HCT116 (cell line): ENCODE measurements at regions of chr19 and their contacts with region 1.

Region 1: GRCh38 chr19:45439569-45440254 is 16.0 kb upstream of the ERCC1 start:
- DNase-seq: no peak
- ATAC-seq: peak; percentile 48
- H3K4me3 ChIP-seq: peak overlapping the region; percentile 34 to 63
- H3K27ac ChIP-seq: peak overlapping the region; percentile 81
- H3K4me1 ChIP-seq: peaks cover 23 to 44% of the 10 kb centered on the region in 2 experiments
- H3K27me3 ChIP-seq: no peaks in the 10 kb centered on the region
- CTCF ChIP-seq: peak; percentile 88 to 98 (median 96)
- POLR2A ChIP-seq: no peak
- RAD21 ChIP-seq: peak; percentile 87

Region 2: DNA sequence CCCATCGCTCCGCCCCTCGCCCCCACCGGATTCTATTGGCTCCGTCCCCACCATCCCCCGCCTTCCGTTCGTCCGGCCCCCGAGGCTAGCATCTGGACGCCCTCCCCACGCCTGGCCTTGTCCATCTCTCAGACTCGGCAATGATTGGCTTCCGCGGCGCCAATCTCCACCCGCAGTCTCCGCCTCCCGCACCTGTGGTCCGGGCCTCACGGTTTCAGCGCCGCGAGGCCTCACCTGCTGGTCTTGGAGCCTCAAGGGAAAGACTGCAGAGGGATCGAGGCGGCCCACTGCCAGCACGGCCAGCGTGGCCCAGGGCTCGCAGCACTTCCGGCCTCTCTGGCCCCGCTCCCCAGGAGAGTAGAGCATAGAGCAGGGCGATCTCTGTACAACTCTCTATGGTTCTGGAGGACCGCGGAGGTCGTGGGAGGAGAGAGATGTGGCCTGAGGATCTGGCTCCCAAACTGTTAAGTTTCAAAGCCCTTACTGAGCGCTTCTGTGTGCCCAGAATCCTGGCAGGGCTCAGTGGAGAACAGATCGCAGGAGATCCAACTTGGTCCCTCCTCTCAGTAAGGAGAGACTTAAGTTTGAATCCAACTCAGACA is 16.0 kb before region 1 on chr19 and contains the start of gene ERCC1:
- CTCF ChIA-PET with region 1: interaction called, 24 read pairs
- POLR2A ChIA-PET with region 1: interaction called, 8 read pairs
- RAD21 ChIA-PET with region 1: no interaction called
- intact Hi-C with region 1: no loop called
- DNase-seq: peak; percentile 96
- ATAC-seq: peak; percentile 82
- H3K4me3 ChIP-seq: peak within 1 kb of the TSS; percentile 93 to 96
- H3K27ac ChIP-seq: peak within 1 kb of the TSS; percentile 99
- H3K4me1 ChIP-seq: peaks cover 38 to 77% of the 10 kb centered on the region in 2 experiments
- H3K27me3 ChIP-seq: no peaks in the 10 kb centered on the region
- CTCF ChIP-seq: no peak
- POLR2A ChIP-seq: peak; percentile 84
- RAD21 ChIP-seq: no peak
- total RNA-seq, gene ERCC1: 103 TPM

Region 3: DNA sequence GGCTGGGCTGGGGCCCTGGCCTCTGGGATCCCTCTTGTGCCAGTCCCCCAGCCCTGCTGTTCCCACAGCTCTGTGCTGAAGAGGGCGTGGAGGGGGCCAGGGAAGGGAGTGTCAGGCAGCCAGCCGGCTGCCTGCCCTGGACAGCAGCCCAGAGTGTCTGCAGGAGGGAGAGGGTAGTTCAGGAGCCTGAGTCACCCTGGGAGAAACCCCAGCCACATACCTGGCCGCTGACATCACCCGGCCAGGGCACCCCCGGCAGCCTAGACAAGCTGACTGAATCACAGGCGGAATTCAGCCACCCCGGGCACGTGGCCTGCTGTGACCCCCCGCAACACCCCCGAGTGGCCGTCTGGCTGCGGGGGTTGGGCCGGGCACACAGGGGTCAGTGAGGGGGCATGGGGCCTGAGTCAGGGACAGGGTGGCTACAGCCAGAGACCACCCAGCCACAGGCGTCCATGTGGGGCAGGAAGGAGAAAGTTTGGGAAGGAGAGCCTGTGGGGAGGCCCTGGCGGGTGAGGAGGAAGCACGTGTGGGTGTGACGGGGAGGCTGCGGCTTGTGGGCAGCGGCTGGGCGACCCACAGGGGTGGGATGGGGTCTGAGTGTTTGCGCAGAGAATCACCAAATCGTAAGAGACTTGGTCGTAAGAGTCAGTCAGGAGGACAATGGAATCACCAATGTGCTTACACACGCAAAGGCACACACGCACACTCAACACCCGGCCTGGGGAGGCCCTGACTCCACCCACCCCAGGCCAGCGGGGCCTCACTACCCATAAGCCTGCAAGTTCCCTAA is 16.2 kb after region 1 on chr19:
- CTCF ChIA-PET with region 1: interaction called, 11 read pairs
- POLR2A ChIA-PET with region 1: interaction called, 4 read pairs
- RAD21 ChIA-PET with region 1: no interaction called
- intact Hi-C with region 1: no loop called
- DNase-seq: peak; percentile 95
- ATAC-seq: peak; percentile 93
- H3K4me3 ChIP-seq: peak overlapping the region; percentile 13 to 43; a peak in 3 of 4 replicates
- H3K27ac ChIP-seq: peak overlapping the region; percentile 82
- H3K4me1 ChIP-seq: peaks cover 26 to 53% of the 10 kb centered on the region in 2 experiments
- H3K27me3 ChIP-seq: no peaks in the 10 kb centered on the region
- CTCF ChIP-seq: no peak
- POLR2A ChIP-seq: no peak
- RAD21 ChIP-seq: no peak

Region 4: DNA sequence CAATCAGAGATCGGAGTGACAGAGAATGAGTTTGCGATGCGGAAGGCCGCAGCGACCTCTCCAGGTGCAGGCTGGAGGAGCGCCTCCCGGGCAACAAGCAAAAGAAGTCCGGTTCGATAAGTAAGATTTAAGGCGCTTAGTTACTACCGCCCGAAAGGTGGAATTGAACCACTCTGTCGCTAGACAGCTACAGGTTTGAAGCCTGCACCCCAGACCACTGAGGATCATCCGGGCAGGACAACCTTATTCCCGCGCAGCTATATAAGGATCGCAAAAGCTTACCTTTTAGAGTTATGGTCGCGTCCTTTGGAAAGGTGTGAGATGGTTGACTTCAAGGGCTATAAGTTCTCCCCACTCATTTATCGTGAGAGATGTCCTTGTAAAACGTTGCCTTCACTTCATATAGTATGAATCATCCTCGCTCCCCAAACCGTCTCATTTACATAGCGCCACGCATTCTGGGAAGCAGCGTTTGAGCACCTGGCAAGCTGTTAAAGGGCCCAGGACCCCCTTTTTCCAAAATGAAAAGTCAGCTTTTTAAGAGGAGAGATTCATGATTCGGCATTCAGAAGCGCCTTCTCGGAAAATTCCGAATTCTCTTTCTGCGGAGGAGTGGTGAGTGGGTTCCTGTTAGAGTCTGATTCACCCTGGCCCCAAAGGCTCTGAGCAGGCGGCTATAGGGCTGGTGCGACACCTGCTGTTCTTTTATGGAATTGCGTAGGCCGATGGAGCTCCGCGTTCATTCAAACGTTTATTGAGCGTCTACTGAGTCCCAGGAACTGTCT is 38.9 kb after region 1 on chr19:
- CTCF ChIA-PET with region 1: interaction called, 189 read pairs
- POLR2A ChIA-PET with region 1: interaction called, 23 read pairs
- RAD21 ChIA-PET with region 1: interaction called, 31 to 40 read pairs
- intact Hi-C with region 1: loop called (anchors 1 kb)
- DNase-seq: peak; percentile 95
- ATAC-seq: peak; percentile 95
- H3K4me3 ChIP-seq: peak overlapping the region; percentile 37 to 53
- H3K27ac ChIP-seq: peak overlapping the region; percentile 71
- H3K4me1 ChIP-seq: peaks cover 5 to 24% of the 10 kb centered on the region in 2 experiments; a peak in 3 of 4 replicates
- H3K27me3 ChIP-seq: no peaks in the 10 kb centered on the region
- CTCF ChIP-seq: peak; percentile 91 to 99 (median 98)
- POLR2A ChIP-seq: peak; percentile 80
- RAD21 ChIP-seq: peak; percentile 97

Region 5: GRCh38 chr19:45558399-45558878 is 118.7 kb after region 1 on chr19:
- CTCF ChIA-PET with region 1: interaction called, 10 read pairs
- POLR2A ChIA-PET with region 1: no interaction called
- RAD21 ChIA-PET with region 1: no interaction called
- intact Hi-C with region 1: no loop called
- DNase-seq: peak; percentile 81
- ATAC-seq: peak; percentile 99
- H3K4me3 ChIP-seq: no peak overlapping the region
- H3K27ac ChIP-seq: peak overlapping the region; percentile 38; the same call in 1 of the 2 replicates
- H3K4me1 ChIP-seq: peaks cover 6 to 8% of the 10 kb centered on the region in 2 experiments
- H3K27me3 ChIP-seq: no peaks in the 10 kb centered on the region
- CTCF ChIP-seq: peak; percentile 84 to 97 (median 84)
- POLR2A ChIP-seq: no peak
- RAD21 ChIP-seq: peak; percentile 88

Region 6: DNA sequence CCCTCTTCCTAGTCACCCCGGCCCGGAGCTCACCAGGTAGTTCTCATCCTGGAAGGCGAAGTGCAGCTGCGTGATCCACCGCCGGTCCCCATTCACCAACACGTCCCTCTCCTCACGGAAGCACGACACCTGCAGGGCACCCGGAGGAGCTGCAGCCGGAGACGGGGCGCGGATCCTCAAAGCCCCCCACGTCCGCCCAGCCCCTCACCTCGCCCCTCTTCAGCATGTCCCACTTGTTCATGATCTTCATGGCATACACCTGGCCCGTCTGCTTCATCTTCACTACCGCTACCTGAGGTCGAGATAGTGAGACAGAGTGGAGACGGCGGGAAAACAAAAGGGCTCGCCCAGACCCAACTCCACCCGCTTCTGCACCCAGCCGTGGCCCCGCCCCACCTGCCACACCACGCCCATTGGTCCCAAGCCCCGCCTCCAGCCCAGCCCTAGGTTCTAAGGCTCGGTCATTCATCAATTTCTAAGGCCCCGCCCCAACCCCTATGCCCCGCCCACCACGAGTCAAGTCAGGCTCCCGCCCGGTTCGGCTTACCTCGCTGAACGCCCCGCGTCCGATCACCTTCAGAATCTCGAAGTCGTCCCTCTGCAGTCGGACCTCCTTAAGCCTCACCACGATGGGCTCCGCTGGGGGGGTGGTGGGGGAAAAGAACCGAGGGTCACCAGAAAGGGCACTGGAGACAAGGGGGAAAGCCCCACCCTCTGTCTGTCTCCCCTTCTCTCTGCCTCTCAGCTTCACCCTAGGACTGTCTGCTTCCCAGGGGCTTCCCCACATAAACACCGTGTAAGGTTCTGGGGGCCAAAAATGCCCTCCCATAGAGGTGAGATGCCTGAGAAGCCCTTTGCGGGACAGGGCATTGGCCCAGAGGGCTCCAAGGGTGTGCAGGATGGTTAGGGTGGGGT is 339.8 kb after region 1 on chr19:
- CTCF ChIA-PET with region 1: no interaction called
- POLR2A ChIA-PET with region 1: no interaction called
- RAD21 ChIA-PET with region 1: no interaction called
- intact Hi-C with region 1: no loop called
- DNase-seq: peak; percentile 87
- ATAC-seq: peak; percentile 85
- H3K4me3 ChIP-seq: peak overlapping the region; percentile 53 to 59
- H3K27ac ChIP-seq: peak overlapping the region; percentile 91
- H3K4me1 ChIP-seq: peaks cover 45 to 60% of the 10 kb centered on the region in 2 experiments
- H3K27me3 ChIP-seq: no peaks in the 10 kb centered on the region
- CTCF ChIP-seq: peak in 2 of 3 experiments; percentile 83 to 90; a peak in 5 of 6 replicates
- POLR2A ChIP-seq: peak; percentile 30
- RAD21 ChIP-seq: peak; percentile 57; the same call in 1 of the 2 replicates